Activated CD4-positive, alpha-beta T cell treated with anti-CD3 and anti-CD28 coated beads for 36 hours (primary cell): ENCODE measurements at regions of chr1 and their contacts with region 1.

Region 1: GRCh38 chr1:24201941-24202440 is 14.9 kb upstream of the IFNLR1 start:
- DNase-seq: peak; percentile 78
- ATAC-seq: no peak
- H3K4me3 Mint-ChIP-seq: no peak overlapping the region
- H3K27ac Mint-ChIP-seq: no peak overlapping the region
- H3K4me1 Mint-ChIP-seq: peaks cover 27% of the 10 kb centered on the region
- H3K27me3 Mint-ChIP-seq: peaks cover 2% of the 10 kb centered on the region

Region 2: DNA sequence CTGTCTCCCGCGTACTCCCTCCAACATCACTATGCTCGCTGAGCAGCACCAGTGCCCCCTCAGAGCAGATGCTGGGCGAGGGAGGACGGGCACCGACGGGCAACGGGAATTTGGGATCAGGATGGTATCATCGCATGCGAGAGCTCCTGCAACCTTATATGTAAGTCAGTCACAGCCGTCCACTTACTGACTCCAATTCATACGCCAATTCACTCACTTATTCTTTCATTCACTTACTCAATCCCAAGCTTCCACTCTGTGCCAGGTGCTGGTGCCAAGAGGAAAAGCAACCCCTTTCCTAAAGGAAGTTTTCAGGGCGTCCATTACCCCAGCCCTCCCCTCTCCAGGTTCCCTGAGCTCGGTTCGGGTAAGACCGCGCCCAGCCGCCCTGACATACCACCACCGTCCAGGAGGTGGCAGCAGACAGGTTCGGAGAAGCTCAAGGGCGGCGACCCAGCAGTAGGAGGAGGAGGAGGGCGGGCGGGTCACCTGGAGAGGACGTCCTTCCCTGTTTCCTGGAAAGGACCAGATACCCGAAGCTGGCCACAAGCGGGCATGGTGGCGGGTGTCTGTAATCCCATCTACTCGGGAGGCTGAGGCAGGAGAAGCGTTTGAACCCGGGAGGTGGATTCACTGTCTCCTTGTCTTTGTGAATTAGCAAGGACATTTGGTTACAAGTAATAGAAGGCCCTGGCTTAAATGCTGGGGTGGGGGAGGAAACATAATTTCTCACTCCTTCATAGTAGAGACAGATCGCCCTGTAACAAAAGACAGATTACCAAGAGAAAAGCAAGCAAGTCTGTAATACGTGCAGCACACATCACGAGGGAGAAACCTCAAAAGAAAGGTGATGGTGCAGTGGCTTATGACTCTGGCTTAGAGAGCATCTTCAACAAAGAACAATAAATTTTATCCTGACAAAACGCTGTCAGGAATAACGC is 51.5 kb before region 1 on chr1:
- CTCF ChIA-PET with region 1: interaction called, 43 read pairs
- POLR2A ChIA-PET with region 1: interaction called, 11 read pairs
- intact Hi-C with region 1: loop called (anchors 1 to 2 kb)
- DNase-seq: peak; percentile 94
- ATAC-seq: peak; percentile 92
- H3K4me3 Mint-ChIP-seq: peak overlapping the region; percentile 34
- H3K27ac Mint-ChIP-seq: no peak overlapping the region
- H3K4me1 Mint-ChIP-seq: peaks cover 19% of the 10 kb centered on the region
- H3K27me3 Mint-ChIP-seq: peaks cover 18% of the 10 kb centered on the region

Region 3: DNA sequence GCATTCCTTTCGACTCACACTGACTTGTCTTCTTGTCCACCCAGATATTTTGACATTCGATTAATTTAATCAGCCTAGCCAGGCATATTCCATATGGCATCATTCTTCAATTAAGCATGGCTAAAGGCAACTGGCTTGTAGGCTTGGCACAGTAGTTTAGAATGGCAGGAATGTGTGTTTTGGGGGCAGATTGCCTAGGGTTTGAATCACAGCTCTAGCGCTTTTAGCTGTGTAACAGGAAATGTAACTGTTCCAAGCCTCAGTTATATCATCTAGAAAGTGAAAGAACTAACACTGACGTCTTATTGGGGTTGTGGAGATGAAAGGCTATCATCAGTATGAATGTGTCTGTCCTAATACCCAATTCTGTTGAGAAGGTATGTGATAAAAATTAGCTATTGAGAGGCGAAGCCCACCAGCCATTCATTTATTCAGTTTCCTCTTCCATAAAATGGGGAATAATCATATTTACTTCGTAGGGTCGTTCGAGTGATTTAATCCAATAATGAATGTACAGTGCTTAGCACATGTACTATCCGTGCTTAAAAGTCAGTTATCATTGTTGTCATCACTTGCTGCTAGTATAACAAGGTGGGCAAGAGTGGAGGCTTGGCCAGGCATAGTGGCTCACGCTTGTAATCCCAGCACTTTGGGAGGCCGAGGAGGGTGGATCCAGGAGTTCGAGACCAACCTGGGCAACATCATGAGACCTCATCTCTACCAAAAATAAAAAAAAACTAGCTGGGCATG is 75.6 kb after region 1 on chr1:
- CTCF ChIA-PET with region 1: no interaction called
- POLR2A ChIA-PET with region 1: no interaction called
- intact Hi-C with region 1: loop called in 1 of 2 experiments (anchors 5 kb)
- DNase-seq: peak; percentile 25
- ATAC-seq: peak; percentile 95
- H3K4me3 Mint-ChIP-seq: no peak overlapping the region
- H3K27ac Mint-ChIP-seq: no peak overlapping the region
- H3K4me1 Mint-ChIP-seq: peaks cover 9% of the 10 kb centered on the region
- H3K27me3 Mint-ChIP-seq: peaks cover 20% of the 10 kb centered on the region

Region 4: GRCh38 chr1:24385160-24385940 is 183.4 kb after region 1 on chr1:
- CTCF ChIA-PET with region 1: interaction called, 335 read pairs
- POLR2A ChIA-PET with region 1: interaction called, 4 read pairs
- intact Hi-C with region 1: no loop called
- DNase-seq: peak; percentile 69
- ATAC-seq: peak; percentile 57
- H3K4me3 Mint-ChIP-seq: no peak overlapping the region
- H3K27ac Mint-ChIP-seq: peak overlapping the region; percentile 55
- H3K4me1 Mint-ChIP-seq: peaks cover 29% of the 10 kb centered on the region
- H3K27me3 Mint-ChIP-seq: no peaks in the 10 kb centered on the region

Region 5: GRCh38 chr1:24830680-24831272 is 628.8 kb after region 1 on chr1:
- CTCF ChIA-PET with region 1: interaction called, 4 read pairs
- POLR2A ChIA-PET with region 1: no interaction called
- intact Hi-C with region 1: loop called in 1 of 2 experiments (anchors 2 kb)
- DNase-seq: no peak
- ATAC-seq: peak; percentile 36
- H3K4me3 Mint-ChIP-seq: no peak overlapping the region
- H3K27ac Mint-ChIP-seq: no peak overlapping the region
- H3K4me1 Mint-ChIP-seq: no peaks in the 10 kb centered on the region
- H3K27me3 Mint-ChIP-seq: no peaks in the 10 kb centered on the region